Tibial artery (tissue), 4 donors: ENCODE measurements at regions of chr2 and their contacts with region 1.

Region 1: GRCh38 chr2:48221846-48222516 is 308.0 kb upstream of the STON1 start:
- DNase-seq: no peak
- H3K4me3 ChIP-seq: no peak overlapping the region
- H3K27ac ChIP-seq: no peak overlapping the region
- H3K4me1 ChIP-seq: no peaks in the 10 kb centered on the region
- H3K27me3 ChIP-seq: no peaks in the 10 kb centered on the region
- CTCF ChIP-seq: no peak

Region 2: DNA sequence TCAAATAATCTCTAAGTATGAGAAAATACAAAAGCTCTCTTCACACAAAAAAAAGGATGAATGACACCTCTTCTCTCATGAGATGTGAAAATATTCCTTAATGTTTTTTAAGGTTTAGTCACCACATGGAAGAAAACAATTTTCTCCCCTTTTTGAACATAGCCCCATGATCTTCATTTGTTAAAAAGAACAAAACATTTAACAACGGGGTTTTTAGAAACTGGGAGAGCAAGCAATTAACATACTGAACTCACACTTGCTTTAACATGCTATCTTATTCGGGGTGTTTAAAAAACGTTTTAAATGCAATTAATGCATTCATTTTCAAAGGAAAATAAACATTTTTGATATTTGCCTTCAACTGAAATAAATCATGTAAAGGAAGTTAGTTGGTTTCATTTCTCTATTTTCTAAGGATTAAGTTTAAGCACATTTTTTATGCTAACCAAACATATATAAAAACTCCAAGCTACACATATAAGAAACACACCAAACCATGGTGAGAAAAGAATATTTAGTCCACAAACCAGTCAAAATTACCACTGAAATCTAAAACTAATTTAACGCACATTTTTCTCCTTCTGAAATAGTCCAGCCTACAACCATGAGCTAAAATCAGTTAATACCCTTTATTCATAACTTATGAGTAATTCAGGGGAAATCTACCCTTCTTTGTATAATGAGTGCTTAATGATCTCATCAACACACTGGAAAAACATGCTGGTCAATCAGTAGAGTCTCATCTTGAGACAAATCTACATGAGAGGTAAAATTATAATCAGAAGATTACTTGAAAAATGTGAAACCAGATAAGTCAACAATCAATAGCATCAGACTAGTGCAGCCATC is 323.9 kb before region 1 on chr2:
- intact Hi-C with region 1: loop called (anchors 5 kb)
- DNase-seq: no peak
- H3K4me3 ChIP-seq: no peak overlapping the region
- H3K27ac ChIP-seq: no peak overlapping the region
- H3K4me1 ChIP-seq: peaks cover 0 to 83% (median 20%) of the 10 kb centered on the region in 4 donors
- H3K27me3 ChIP-seq: no peaks in the 10 kb centered on the region
- CTCF ChIP-seq: no peak